Activated naive CD8-positive, alpha-beta T cell treated with anti-CD3 and anti-CD28 coated beads, Interleukin-2, amount 10 ng/mL, durations not matched to agents 7 days and 5 days (primary cell): ENCODE measurements at regions of chr4 and their contacts with region 1.

Region 1: GRCh38 chr4:7067452-7068278 is at the start of gene GRPEL1:
- DNase-seq: peak; percentile 100
- ATAC-seq: peak; percentile 96
- H3K4me3 Mint-ChIP-seq: peak within 1 kb of the TSS; percentile 96
- H3K27ac Mint-ChIP-seq: peak within 1 kb of the TSS; percentile 94
- H3K4me1 Mint-ChIP-seq: peaks cover 32% of the 10 kb centered on the region
- H3K27me3 Mint-ChIP-seq: peaks cover 6% of the 10 kb centered on the region
- total RNA-seq, gene GRPEL1: 36.3 to 37.9 TPM

Region 2: DNA sequence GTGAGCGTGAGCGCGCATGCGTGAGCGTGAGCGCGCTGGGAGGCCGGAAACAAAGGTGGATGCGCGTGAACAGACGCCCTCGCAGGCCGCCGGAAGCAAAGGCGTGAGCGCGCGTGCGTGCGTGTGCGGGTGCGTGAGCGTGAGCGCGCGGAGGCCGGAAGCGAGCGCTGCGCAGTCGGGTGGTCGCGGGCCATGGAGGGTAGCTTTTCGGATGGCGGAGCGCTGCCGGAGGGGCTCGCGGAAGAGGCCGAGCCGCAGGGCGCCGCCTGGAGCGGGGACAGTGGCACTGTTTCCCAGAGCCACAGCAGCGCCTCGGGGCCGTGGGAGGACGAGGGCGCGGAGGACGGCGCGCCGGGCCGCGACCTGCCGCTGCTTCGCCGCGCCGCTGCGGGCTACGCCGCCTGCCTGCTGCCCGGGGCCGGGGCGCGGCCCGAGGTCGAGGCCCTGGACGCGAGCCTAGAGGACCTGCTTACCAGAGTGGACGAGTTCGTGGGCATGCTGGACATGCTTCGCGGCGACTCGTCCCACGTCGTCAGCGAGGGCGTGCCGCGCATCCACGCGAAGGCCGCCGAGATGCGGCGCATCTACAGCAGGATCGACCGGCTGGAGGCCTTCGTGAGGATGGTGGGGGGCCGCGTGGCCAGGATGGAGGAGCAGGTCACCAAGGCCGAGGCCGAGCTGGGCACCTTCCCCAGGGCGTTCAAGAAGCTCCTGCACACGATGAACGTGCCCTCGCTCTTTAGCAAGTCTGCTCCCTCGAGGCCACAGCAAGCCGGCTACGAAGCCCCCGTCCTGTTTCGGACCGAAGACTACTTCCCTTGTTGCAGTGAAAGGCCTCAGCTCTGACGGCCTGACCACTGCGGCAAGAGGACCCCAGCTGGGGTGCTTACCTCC is 351.4 kb before region 1 on chr4 and contains the start of gene BLOC1S4:
- POLR2A ChIA-PET with region 1: interaction called, 13 read pairs
- DNase-seq: peak; percentile 95
- ATAC-seq: peak; percentile 80
- H3K4me3 Mint-ChIP-seq: peak within 1 kb of the TSS; percentile 90
- H3K27ac Mint-ChIP-seq: peak within 1 kb of the TSS; percentile 95
- H3K4me1 Mint-ChIP-seq: peaks cover 25% of the 10 kb centered on the region
- H3K27me3 Mint-ChIP-seq: peaks cover 2% of the 10 kb centered on the region
- total RNA-seq, gene BLOC1S4: 23.9 to 24.3 TPM

Region 3: DNA sequence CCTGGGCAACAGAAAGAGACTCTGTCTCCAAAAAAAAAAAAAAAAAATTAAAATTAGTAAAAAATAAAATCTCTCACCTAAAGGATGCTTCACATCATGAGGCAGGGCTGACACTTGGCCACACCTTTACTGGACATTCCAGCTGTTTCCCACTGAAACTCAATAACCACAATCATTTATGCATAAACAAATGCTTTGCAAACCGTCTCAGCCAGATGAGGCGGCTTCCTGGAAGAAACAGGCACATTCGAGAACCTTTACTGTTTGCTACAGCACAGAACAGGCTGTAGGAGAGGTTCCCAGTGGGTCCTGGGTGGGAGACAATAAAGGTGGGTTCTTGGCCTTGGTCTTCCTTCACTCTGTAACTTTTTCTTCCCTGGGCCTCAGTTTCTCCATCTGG is 168.9 kb before region 1 on chr4:
- POLR2A ChIA-PET with region 1: interaction called, 13 read pairs
- DNase-seq: no peak
- ATAC-seq: peak; percentile 10
- H3K4me3 Mint-ChIP-seq: peak overlapping the region; percentile 68
- H3K27ac Mint-ChIP-seq: peak overlapping the region; percentile 95
- H3K4me1 Mint-ChIP-seq: peaks cover 24% of the 10 kb centered on the region
- H3K27me3 Mint-ChIP-seq: no peaks in the 10 kb centered on the region

Region 4: DNA sequence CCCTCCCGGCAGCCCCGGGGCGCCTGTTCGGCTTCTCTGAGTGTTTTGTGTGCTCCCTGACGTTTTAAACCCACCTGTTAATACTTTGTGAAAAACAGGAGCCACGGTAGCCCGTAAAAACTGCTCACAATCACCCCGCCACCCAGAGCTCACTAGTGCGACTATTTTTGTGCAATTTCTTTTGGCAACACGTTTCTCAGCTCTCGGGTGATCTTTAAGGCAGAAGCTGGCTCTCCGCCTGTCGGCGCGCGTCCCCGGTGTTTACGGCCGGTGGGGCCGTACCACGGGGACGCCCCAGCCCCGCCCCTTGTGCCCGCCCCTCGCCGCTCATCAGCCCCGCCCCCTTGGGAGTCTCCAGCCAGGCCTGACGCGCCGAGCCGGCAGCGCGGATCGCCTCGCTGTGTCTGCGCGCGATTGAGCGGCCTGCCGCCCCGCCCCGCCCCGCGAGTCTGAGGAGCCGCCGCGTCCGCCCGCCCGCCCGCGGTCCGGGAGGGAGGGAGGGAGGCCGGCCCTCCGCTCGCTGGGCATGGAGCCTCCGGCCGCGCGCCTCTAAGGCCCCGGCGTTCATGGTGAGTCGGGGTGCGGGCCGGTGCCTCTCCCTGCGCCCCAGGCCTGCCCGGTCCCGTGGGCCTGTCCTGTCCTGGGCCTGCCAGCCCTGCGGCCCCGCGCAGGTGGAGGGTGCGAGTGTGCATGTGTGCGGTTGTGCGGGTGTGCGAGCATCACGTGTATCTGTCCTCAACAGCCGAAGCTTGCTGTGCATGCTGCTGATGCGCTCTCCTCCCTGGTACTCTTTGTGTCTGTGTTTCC is 80.7 kb before region 1 on chr4:
- POLR2A ChIA-PET with region 1: interaction called, 16 read pairs
- DNase-seq: peak; percentile 95
- ATAC-seq: peak; percentile 89
- H3K4me3 Mint-ChIP-seq: peak overlapping the region; percentile 92
- H3K27ac Mint-ChIP-seq: peak overlapping the region; percentile 92
- H3K4me1 Mint-ChIP-seq: peaks cover 58% of the 10 kb centered on the region
- H3K27me3 Mint-ChIP-seq: no peaks in the 10 kb centered on the region

Region 5: DNA sequence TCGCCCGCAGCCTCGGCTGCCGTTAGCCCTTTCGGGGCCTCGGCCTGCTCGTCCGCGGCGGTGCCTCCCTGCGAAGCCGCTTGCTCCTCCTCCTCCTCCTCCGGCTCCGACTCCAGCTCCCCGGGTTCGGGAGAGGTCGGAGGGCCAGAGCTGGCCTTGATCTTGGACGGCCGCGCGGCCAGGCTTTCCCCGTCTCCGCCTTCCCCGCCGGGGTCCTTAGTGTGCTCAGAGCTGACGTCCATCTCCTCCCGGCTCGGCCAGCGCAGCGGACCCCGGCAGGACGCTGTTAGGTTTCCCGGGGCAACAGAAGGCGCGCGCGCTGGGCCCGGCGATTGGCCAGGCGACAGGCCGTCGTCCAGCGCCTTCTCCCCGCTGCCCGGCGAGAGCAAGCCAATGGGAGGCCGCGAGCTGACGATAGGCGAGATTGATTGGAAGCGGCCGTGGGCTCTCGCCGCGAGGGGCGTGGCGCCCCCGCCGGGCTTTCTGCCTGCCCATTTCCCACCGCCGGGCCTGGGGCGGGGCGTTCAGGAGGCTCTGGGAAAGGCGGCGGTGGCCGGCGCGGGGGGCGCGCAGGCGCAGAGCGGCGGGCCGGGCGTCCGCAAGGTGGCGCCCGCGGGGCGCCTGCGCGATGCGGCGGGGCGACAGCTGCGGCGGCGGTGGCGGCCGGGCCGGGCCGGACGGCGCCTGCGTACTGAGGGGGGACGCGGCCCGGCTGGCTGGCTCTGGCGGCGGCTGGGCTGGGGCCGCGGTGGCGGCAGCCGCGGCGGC is 24.8 kb before region 1 on chr4 and contains the start of gene TADA2B:
- POLR2A ChIA-PET with region 1: interaction called, 101 read pairs
- DNase-seq: peak; percentile 98
- ATAC-seq: peak; percentile 85
- H3K4me3 Mint-ChIP-seq: peak within 1 kb of the TSS; percentile 96
- H3K27ac Mint-ChIP-seq: peak within 1 kb of the TSS; percentile 91
- H3K4me1 Mint-ChIP-seq: peaks cover 35% of the 10 kb centered on the region
- H3K27me3 Mint-ChIP-seq: peaks cover 6% of the 10 kb centered on the region
- total RNA-seq, gene TADA2B: 25.8 to 27.1 TPM

Region 6: GRCh38 chr4:7052923-7053715 is 14.5 kb before region 1 on chr4:
- POLR2A ChIA-PET with region 1: interaction called, 15 read pairs
- DNase-seq: no peak
- ATAC-seq: peak; percentile 62
- H3K4me3 Mint-ChIP-seq: no peak overlapping the region
- H3K27ac Mint-ChIP-seq: no peak overlapping the region
- H3K4me1 Mint-ChIP-seq: peaks cover 11% of the 10 kb centered on the region
- H3K27me3 Mint-ChIP-seq: no peaks in the 10 kb centered on the region

Region 7: GRCh38 chr4:7156761-7157488 is 89.3 kb after region 1 on chr4:
- POLR2A ChIA-PET with region 1: no interaction called
- DNase-seq: peak; percentile 11
- ATAC-seq: no peak
- H3K4me3 Mint-ChIP-seq: no peak overlapping the region
- H3K27ac Mint-ChIP-seq: no peak overlapping the region
- H3K4me1 Mint-ChIP-seq: peaks cover 3% of the 10 kb centered on the region
- H3K27me3 Mint-ChIP-seq: peaks cover 41% of the 10 kb centered on the region